ENCODE measurements at regions of chr9 and their contacts with region 1.

Region 1: DNA sequence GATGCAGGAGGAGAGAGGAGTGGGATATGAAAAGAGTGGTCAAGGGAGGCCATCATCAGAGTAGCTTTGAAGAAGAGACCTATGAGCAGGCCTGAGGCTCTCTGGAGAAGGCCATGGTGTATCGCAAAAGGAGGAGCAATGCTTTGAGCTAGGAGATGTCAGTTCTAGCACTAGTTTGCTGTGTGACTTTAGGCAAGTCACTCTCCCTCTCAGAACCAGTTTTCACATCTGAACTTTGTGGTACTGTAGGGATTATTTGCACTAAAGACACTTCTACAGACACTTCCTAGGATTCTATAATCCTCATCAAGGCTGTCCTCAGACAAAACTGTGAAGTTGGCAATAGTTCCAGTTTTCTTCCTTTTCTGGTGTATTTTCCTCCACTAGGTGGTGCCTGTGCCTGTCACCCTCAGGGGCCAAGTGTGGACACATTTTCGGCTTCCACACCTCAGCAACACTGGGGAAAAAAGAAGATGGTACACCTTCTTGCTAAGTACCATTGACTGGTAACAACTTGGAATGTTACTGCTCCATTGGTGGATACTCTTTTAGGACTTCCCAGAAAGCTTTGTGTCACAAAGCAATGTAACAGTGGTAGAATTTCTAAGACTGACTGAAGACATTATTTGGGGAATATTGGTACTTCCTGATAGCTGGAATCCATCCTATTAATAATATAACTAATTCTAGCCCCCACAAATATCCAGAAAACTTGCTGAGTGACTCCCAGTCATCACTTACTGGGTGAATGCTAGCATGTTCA is 9.9 kb downstream of the PAPPA start:
- DNase-seq: no peak

Region 2: GRCh38 chr9:116275418-116276195 is 112.1 kb after region 1 on chr9:
- intact Hi-C with region 1: no loop called
- DNase-seq: no peak

Region 3: GRCh38 chr9:116494815-116495634 is 331.6 kb after region 1 on chr9:
- intact Hi-C with region 1: loop called (anchors 10 kb)
- DNase-seq: peak in 2 of 10 donors; percentile 15 to 21

Measured in posterior cingulate gyrus (tissue), 11 donors.